ENCODE measurements at regions of chr5 and their contacts with region 1.

Region 1: DNA sequence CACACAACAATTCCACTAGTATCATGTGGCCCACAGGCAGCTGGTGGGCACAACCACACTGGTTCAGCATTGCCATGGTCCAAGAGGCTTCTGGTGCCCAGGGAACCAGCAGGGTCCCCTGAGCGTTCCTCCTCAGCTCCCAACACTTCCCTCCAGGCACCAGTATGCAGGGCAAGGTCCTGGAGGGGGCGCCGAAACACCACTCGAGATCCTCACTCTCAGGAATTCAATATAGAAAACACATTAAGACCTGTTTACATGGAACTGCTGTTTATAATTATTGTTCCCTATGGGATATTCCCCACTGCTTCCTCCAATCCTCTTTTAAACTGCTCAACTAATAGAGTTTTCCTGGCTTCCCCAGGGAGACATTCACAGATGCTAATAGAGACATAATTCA is 91.9 kb upstream of the GABRP start:
- DNase-seq: peak in 1 of 2 experiments; percentile 75
- H3K4me3 ChIP-seq: no peak overlapping the region
- H3K27ac ChIP-seq: no peak overlapping the region
- H3K4me1 ChIP-seq: no peaks in the 10 kb centered on the region
- H3K27me3 ChIP-seq: no peaks in the 10 kb centered on the region
- CTCF ChIP-seq: peak; percentile 76 to 82 (median 77)
- EP300 ChIP-seq: no peak
- POLR2A ChIP-seq: no peak
- RAD21 ChIP-seq: peak; percentile 88 to 91

Region 2: DNA sequence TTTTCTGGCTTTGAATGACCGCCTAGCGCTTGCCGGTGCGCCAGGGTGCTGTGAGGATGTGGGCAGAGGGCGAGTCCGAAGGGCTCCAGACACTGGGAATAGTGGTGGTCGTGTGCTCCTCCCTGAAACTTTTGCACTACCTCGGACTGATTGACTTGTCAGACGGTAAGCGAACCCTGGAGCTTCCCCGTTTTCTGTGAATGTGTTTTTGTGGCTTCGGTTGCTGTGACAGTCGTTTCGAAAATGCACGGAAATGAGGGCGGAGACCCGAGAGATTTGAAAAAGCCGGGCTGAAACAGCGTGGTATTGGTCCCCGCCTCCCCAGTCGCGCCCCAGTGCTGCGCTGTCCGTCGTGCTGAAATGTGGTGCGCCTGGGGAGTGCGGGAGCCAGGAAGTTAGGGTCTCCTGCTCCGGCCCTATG is 10.6 kb before region 1 on chr5:
- CTCF ChIA-PET with region 1: interaction called, 11 read pairs
- POLR2A ChIA-PET with region 1: no interaction called
- DNase-seq: peak in 1 of 2 experiments; percentile 88
- H3K4me3 ChIP-seq: peak overlapping the region; percentile 36 to 59 (median 57); a peak in 7 of 8 replicates
- H3K27ac ChIP-seq: no peak overlapping the region
- H3K4me1 ChIP-seq: peaks cover 0 to 7% (median 2%) of the 10 kb centered on the region in 4 experiments; a peak in 2 of 7 replicates
- H3K27me3 ChIP-seq: peaks cover 6 to 15% (median 11%) of the 10 kb centered on the region in 4 experiments
- CTCF ChIP-seq: no peak
- EP300 ChIP-seq: no peak
- POLR2A ChIP-seq: no peak
- RAD21 ChIP-seq: peak in 1 of 2 experiments; percentile 14; a peak in 1 of 4 replicates

Region 3: GRCh38 chr5:170711289-170711688 is 19.6 kb after region 1 on chr5:
- CTCF ChIA-PET with region 1: interaction called, 29 read pairs
- POLR2A ChIA-PET with region 1: no interaction called
- DNase-seq: no peak
- H3K4me3 ChIP-seq: no peak overlapping the region
- H3K27ac ChIP-seq: no peak overlapping the region
- H3K4me1 ChIP-seq: no peaks in the 10 kb centered on the region
- H3K27me3 ChIP-seq: no peaks in the 10 kb centered on the region
- CTCF ChIP-seq: no peak
- EP300 ChIP-seq: no peak
- POLR2A ChIP-seq: no peak
- RAD21 ChIP-seq: no peak